Gastrocnemius medialis (tissue), 4 donors: ENCODE measurements at regions of chr6 and their contacts with region 1.

Region 1: GRCh38 chr6:163897030-163897429 is 482.5 kb downstream of the QKI start:
- DNase-seq: peak; percentile 20 to 46
- ATAC-seq: peak; percentile 72 to 94
- H3K4me3 ChIP-seq: no peak overlapping the region
- H3K27ac ChIP-seq: peak overlapping the region in 2 of 4 donors; percentile 26 to 28
- H3K4me1 ChIP-seq: no peaks in the 10 kb centered on the region
- H3K27me3 ChIP-seq: no peaks in the 10 kb centered on the region
- CTCF ChIP-seq: no peak
- POLR2A ChIP-seq: no peak

Region 2: DNA sequence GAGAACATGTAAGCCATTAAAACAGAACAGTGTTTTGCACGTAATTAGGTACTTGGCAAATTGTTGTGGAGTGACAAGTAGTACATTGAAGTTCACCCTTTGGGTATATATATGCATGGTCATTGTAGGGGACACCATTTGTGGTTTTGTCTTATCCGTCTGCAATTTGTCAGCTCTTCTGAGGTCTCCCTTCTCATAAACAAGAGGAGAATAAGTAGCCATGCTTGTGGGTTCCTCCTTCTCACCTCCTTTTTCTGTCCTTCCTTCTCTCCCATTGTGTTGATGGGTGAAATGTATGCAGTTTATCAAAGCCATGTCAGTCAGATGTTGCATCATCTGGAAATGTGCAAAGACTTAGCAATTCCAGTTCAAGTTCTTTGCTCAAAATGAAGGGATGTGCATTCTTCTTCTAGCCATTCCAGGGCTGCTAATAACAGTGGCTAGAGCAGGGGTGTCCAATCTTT is 411.6 kb before region 1 on chr6:
- in situ Hi-C with region 1: no loop called
- intact Hi-C with region 1: no loop called
- DNase-seq: no peak
- ATAC-seq: peak in 1 of 2 donors; percentile 7
- H3K4me3 ChIP-seq: no peak overlapping the region
- H3K27ac ChIP-seq: peak overlapping the region; percentile 76 to 84 (median 78)
- H3K4me1 ChIP-seq: peaks cover 96% of the 10 kb centered on the region in 2 donors
- H3K27me3 ChIP-seq: no peaks in the 10 kb centered on the region
- CTCF ChIP-seq: no peak
- POLR2A ChIP-seq: no peak

Region 3: GRCh38 chr6:163935158-163935762 is 38.2 kb after region 1 on chr6:
- in situ Hi-C with region 1: no loop called
- intact Hi-C with region 1: loop called (anchors 5 kb)
- DNase-seq: no peak
- ATAC-seq: no peak
- H3K4me3 ChIP-seq: no peak overlapping the region
- H3K27ac ChIP-seq: no peak overlapping the region
- H3K4me1 ChIP-seq: no peaks in the 10 kb centered on the region
- H3K27me3 ChIP-seq: no peaks in the 10 kb centered on the region
- CTCF ChIP-seq: no peak
- POLR2A ChIP-seq: no peak